ENCODE measurements at regions of chr10 and their contacts with region 1.

Region 1: DNA sequence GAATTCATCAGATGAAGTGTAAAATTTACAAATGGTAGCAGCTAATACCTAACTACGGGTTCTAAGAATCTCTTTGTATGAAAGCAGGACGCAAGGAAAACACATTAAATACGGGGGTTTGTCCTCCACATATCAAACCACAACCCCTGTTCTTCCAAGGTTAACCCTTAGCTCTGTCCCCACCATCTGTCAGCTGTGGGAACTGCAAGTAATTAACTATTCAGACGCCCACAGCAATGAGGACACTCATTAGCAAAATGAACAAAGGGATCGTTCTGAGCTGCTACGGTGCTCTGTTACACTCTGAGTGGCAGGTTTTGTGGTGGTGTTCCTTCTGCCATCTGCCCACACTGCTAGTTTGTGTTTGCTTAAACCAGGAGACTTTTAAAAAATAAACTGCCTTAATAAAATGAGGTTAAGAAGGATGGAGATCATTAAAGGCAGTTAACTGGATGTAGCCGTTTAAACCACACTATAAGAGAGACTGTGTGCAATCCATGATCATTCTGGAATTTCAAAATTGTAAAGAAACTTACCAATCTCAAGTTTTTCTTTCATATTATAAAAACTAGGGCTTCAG is 51.4 kb downstream of the C10orf67 start:
- DNase-seq: peak; percentile 69
- H3K4me3 Mint-ChIP-seq: no peak overlapping the region
- H3K27ac Mint-ChIP-seq: no peak overlapping the region
- H3K4me1 Mint-ChIP-seq: no peaks in the 10 kb centered on the region
- H3K27me3 Mint-ChIP-seq: peaks cover 30% of the 10 kb centered on the region
- CTCF ChIP-seq: peak; percentile 65

Region 2: GRCh38 chr10:23280420-23281043 is 12.7 kb before region 1 on chr10:
- CTCF ChIA-PET with region 1: interaction called, 14 read pairs
- POLR2A ChIA-PET with region 1: interaction called, 3 read pairs
- intact Hi-C with region 1: no loop called
- DNase-seq: no peak
- H3K4me3 Mint-ChIP-seq: no peak overlapping the region
- H3K27ac Mint-ChIP-seq: no peak overlapping the region
- H3K4me1 Mint-ChIP-seq: peaks cover 5% of the 10 kb centered on the region
- H3K27me3 Mint-ChIP-seq: peaks cover 35% of the 10 kb centered on the region
- CTCF ChIP-seq: no peak

Region 3: DNA sequence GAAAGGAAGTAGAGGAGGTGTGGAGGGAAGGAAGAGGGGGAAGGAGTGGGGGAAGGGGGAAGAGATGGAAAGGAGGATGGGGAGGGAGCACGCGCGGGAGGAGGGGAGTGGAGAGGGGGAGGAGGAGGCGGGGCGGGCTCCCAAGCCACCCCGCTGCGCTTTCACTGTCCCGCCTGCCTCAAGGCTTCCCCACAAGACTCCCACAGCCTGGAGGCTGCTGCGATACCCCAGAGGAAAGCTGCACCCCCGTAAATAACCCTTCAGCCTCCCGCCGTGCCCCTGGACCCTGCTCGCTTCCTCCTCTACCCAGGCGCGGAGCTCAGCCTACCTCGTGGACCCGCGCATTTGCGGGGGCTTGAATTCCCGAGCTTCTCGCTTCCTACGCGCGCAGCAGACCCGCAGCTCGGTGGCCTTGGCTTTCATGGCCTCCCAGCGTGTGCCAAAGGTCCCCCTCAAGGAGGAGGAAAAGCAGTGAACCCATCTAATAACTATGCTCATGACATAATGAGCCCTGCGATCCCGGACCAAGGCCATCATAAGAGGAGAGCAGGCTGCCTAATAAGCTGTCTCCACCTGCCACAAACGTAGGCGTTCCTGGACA is 51.1 kb after region 1 on chr10 and contains the start of gene C10orf67:
- CTCF ChIA-PET with region 1: no interaction called
- POLR2A ChIA-PET with region 1: no interaction called
- intact Hi-C with region 1: no loop called
- DNase-seq: no peak
- H3K4me3 Mint-ChIP-seq: peak within 1 kb of the TSS; percentile 66
- H3K27ac Mint-ChIP-seq: peak within 1 kb of the TSS; percentile 31
- H3K4me1 Mint-ChIP-seq: peaks cover 20% of the 10 kb centered on the region
- H3K27me3 Mint-ChIP-seq: no peaks in the 10 kb centered on the region
- CTCF ChIP-seq: no peak
- total RNA-seq, gene C10orf67: 0.15 and 0.21 TPM in 2 replicates

Region 4: DNA sequence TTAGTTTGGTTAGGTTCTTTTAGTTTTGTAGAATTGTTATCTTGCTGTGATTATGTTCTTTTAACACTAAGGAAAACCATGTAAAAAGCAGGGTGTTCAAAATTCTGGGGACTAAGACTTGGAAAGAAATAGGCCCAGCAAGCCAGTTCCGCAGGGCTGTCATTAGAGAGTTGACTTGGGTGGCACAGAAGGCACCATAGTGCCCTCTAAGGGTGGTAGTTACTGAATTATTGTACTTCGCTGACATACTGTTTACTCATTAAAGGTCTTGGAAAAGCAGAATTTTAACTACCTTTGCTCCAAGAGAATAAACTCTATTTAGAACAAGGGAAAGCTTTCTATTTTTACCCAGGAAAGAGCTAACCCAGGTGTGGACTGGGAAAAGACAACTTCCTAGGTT is 232.2 kb after region 1 on chr10:
- CTCF ChIA-PET with region 1: interaction called, 80 read pairs
- POLR2A ChIA-PET with region 1: no interaction called
- intact Hi-C with region 1: no loop called
- DNase-seq: peak; percentile 61
- H3K4me3 Mint-ChIP-seq: no peak overlapping the region
- H3K27ac Mint-ChIP-seq: no peak overlapping the region
- H3K4me1 Mint-ChIP-seq: peaks cover 6% of the 10 kb centered on the region
- H3K27me3 Mint-ChIP-seq: no peaks in the 10 kb centered on the region
- CTCF ChIP-seq: peak; percentile 76

Region 5: DNA sequence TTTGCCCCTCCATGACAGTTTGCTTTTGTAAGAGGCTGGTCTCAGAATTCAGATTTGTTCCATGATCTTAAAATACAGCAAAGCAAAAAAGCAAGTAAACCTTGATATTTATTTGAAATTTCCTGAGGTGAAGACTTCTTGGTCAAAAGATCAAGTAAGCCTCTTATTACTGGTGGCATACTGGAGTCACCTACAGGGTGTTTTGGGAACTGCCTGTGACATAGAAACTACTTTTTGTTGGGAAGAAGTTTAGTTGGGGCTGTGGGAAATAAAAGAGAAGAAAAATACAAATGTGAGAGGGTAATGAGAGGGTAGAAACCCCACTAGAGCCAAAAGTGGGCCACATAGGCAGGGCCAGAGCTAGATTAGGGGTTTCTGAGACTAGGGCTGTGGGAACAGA is 363.5 kb after region 1 on chr10:
- CTCF ChIA-PET with region 1: interaction called, 14 read pairs
- POLR2A ChIA-PET with region 1: no interaction called
- intact Hi-C with region 1: loop called (anchors 5 kb)
- DNase-seq: peak; percentile 26
- H3K4me3 Mint-ChIP-seq: no peak overlapping the region
- H3K27ac Mint-ChIP-seq: no peak overlapping the region
- H3K4me1 Mint-ChIP-seq: no peaks in the 10 kb centered on the region
- H3K27me3 Mint-ChIP-seq: peaks cover 64% of the 10 kb centered on the region
- CTCF ChIP-seq: peak; percentile 60